Activated T-helper 2 cell treated with anti-CD3 and anti-CD28 coated beads, Interferon-gamma antibody, Interleukin-2, Interleukin-4, amounts not matched to agents 10 μg/mL and 5 μg/mL and 100 μg/mL, durations not matched to agents 14 hours and 24 hours and 36 hours (primary cell): ENCODE measurements at regions of chr7 and their contacts with region 1.

Region 1: GRCh38 chr7:87219545-87220025 is at the start of gene TMEM243:
- DNase-seq: peak; percentile 80
- H3K4me3 Mint-ChIP-seq: peak within 1 kb of the TSS; percentile 99
- H3K27ac Mint-ChIP-seq: peak within 1 kb of the TSS; percentile 97
- H3K4me1 Mint-ChIP-seq: peaks cover 30% of the 10 kb centered on the region
- H3K27me3 Mint-ChIP-seq: peaks cover 13% of the 10 kb centered on the region
- total RNA-seq, gene TMEM243: 41.8 and 43.8 TPM in 2 replicates

Region 2: DNA sequence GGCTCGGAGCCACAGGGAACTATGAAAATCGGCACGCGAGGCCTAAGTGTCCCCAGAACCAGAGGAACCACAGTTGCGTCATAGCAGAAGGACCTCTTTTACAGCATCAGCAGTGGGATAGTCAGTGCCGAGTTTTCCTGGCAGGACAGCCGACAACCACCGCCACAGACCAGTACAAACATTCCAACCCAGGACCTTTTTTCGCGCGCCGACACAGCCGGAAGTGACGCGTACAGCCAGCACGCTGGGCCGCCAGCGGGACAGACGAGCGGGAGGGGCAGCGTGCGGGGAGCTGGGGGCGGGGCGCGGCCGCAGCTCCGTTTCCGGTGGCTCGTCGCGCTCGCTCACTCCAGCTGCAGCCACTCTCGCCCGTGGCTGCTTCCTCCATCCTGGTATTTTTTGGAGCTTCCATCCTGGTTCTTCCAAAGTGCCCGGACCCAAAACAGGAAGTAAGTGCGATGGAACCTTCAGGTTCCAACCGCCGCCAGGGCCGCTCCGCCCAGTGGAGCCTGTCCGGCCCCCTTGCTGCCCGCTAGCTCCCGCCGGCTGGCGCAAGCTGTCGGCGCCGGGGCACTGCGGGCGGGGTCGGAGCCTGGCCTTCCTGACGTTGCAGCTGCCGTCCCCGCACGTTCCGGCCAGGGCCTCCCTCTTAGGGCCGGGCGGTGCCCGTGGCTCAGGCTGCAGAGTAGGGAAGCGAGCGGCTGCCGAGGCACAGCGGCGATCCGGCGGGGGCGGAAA is 67.3 kb before region 1 on chr7 and contains the start of gene DMTF1:
- intact Hi-C with region 1: loop called (anchors 1 kb)
- DNase-seq: peak; percentile 83
- H3K4me3 Mint-ChIP-seq: peak within 1 kb of the TSS; percentile 93
- H3K27ac Mint-ChIP-seq: peak within 1 kb of the TSS; percentile 96
- H3K4me1 Mint-ChIP-seq: peaks cover 39% of the 10 kb centered on the region
- H3K27me3 Mint-ChIP-seq: no peaks in the 10 kb centered on the region
- total RNA-seq, gene DMTF1: 103 and 112 TPM in 2 replicates

Region 3: DNA sequence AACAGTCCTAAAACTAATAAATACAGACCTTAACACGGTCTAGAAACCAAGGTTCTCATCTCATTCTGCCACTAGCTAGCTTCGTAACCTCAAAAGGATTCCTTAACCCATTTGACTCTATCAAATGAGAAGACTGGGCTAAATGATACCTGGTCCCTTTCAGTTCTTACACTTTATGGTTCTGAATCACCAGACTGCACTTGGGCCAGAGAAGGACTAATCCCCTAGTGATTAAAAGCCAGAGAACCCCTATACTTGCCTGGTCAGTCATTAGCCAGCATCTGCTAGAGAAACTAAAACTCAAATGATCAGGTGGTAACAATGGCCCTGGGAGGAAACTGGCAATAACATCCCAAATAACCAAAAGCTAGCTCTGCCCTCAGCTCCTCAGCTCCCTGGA is 16.9 kb before region 1 on chr7:
- intact Hi-C with region 1: loop called (anchors 2 kb)
- DNase-seq: no peak
- H3K4me3 Mint-ChIP-seq: no peak overlapping the region
- H3K27ac Mint-ChIP-seq: no peak overlapping the region
- H3K4me1 Mint-ChIP-seq: peaks cover 32% of the 10 kb centered on the region
- H3K27me3 Mint-ChIP-seq: no peaks in the 10 kb centered on the region

Region 4: DNA sequence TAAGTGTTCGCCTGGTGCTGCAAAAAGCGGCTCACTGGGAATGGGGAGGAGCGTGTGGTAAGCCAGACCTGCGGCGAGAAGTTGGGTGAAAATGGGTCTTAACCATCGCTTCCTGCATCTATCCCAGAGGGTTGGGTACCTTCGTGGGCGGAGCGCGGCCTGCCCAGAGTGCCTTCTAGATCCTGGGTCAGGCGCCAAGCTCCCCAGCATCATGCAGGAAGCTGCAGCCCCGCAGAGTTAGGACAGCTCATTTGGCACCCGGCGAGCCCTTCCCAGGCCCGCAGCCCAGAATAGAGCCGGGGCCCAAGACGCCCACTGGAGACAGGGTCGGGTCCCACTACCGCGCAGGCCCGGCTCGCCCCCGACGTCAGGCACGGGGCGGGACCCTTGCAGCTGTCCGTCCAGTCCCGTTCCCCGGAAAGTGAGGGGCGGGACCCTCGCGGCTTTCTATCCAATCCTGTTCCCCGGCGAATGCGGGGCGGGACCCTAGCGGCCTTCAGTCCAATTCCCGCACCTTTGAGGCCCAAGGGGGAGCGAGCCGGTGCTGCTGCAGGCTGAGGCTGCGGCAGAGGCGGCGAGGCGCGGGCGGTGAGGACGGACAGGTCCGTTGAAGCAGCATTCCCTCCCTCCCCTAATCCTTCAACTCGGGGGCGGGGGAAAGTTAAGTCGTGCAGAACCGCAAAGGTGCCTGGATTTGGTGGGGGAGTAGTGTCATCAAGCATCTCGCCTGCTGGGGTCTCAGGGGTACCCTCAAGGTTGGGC is 125.8 kb after region 1 on chr7 and contains the start of gene CROT:
- intact Hi-C with region 1: loop called (anchors 1 kb)
- DNase-seq: peak; percentile 92
- H3K4me3 Mint-ChIP-seq: peak within 1 kb of the TSS; percentile 87
- H3K27ac Mint-ChIP-seq: peak within 1 kb of the TSS; percentile 79
- H3K4me1 Mint-ChIP-seq: peaks cover 38% of the 10 kb centered on the region
- H3K27me3 Mint-ChIP-seq: no peaks in the 10 kb centered on the region
- total RNA-seq, gene CROT: 7.5 and 7.9 TPM in 2 replicates

Region 5: GRCh38 chr7:87876040-87876868 is 656.7 kb after region 1 on chr7 and contains the starts of genes DBF4 and SLC25A40:
- intact Hi-C with region 1: loop called (anchors 1 kb)
- DNase-seq: peak; percentile 96
- H3K4me3 Mint-ChIP-seq: peak within 1 kb of the TSS; percentile 96
- H3K27ac Mint-ChIP-seq: peak within 1 kb of the TSS; percentile 97
- H3K4me1 Mint-ChIP-seq: peaks cover 49% of the 10 kb centered on the region
- H3K27me3 Mint-ChIP-seq: no peaks in the 10 kb centered on the region
- total RNA-seq, gene DBF4: 72.3 and 75.3 TPM in 2 replicates
- total RNA-seq, gene SLC25A40: 48.7 and 49.3 TPM in 2 replicates